A549 (cell line): ENCODE measurements at regions of chr10 and their contacts with region 1.

Region 1: GRCh38 chr10:100743626-100744135 is 1.7 kb upstream of the PAX2 start:
- DNase-seq: peak; percentile 84 to 85
- ATAC-seq: peak; percentile 54 to 75
- H3K4me3 ChIP-seq: peak overlapping the region; percentile 50
- H3K27ac ChIP-seq: peak overlapping the region in 1 of 2 experiments; percentile 8; a peak in 1 of 6 replicates
- H3K4me1 ChIP-seq: peaks cover 29% of the 10 kb centered on the region
- CTCF ChIP-seq: peak; percentile 88
- EP300 ChIP-seq: no peak
- POLR2A ChIP-seq: no peak
- RAD21 ChIP-seq: peak; percentile 90 to 93

Region 2: DNA sequence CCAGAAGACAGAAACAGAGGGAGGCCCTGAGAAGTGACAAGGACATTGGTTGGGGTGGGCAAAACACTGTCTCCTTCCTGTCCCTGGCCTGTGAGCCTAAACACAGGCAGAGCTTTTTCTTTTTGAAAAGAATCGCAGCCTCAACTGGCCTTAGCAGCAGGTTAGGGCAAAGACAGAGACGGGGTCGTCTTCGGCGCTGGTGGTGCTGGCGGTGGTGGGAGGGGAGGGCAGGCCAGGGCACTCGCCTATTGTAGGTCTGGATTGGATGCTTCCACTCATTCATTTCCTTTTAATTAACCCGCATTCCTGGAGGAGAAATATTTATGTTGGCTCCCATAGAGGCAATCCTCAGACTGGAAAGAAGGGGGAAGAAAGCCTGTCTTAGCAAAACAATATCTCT is 258.3 kb before region 1 on chr10:
- CTCF ChIA-PET with region 1: no interaction called
- POLR2A ChIA-PET with region 1: no interaction called
- DNase-seq: no peak
- ATAC-seq: no peak
- H3K4me3 ChIP-seq: no peak overlapping the region
- H3K27ac ChIP-seq: no peak overlapping the region
- H3K4me1 ChIP-seq: 0 out of 3 replicates have a peak, but pooled peaks cover 3% of the 10 kb centered on the region
- CTCF ChIP-seq: no peak
- EP300 ChIP-seq: no peak
- POLR2A ChIP-seq: no peak
- RAD21 ChIP-seq: no peak

Region 3: GRCh38 chr10:100551196-100551595 is 192.5 kb before region 1 on chr10:
- CTCF ChIA-PET with region 1: interaction called, 26 read pairs
- POLR2A ChIA-PET with region 1: no interaction called
- DNase-seq: no peak
- ATAC-seq: no peak
- H3K4me3 ChIP-seq: no peak overlapping the region
- H3K27ac ChIP-seq: no peak overlapping the region
- H3K4me1 ChIP-seq: peaks cover 6% of the 10 kb centered on the region; the same call in 1 of the 3 replicates
- CTCF ChIP-seq: no peak
- EP300 ChIP-seq: no peak
- POLR2A ChIP-seq: no peak
- RAD21 ChIP-seq: no peak

Region 4: GRCh38 chr10:100598166-100598565 is 145.5 kb before region 1 on chr10:
- CTCF ChIA-PET with region 1: interaction called, 11 read pairs
- POLR2A ChIA-PET with region 1: no interaction called
- DNase-seq: no peak
- ATAC-seq: no peak
- H3K4me3 ChIP-seq: no peak overlapping the region
- H3K27ac ChIP-seq: no peak overlapping the region
- H3K4me1 ChIP-seq: no peaks in the 10 kb centered on the region
- CTCF ChIP-seq: no peak
- EP300 ChIP-seq: no peak
- POLR2A ChIP-seq: no peak
- RAD21 ChIP-seq: no peak

Region 5: DNA sequence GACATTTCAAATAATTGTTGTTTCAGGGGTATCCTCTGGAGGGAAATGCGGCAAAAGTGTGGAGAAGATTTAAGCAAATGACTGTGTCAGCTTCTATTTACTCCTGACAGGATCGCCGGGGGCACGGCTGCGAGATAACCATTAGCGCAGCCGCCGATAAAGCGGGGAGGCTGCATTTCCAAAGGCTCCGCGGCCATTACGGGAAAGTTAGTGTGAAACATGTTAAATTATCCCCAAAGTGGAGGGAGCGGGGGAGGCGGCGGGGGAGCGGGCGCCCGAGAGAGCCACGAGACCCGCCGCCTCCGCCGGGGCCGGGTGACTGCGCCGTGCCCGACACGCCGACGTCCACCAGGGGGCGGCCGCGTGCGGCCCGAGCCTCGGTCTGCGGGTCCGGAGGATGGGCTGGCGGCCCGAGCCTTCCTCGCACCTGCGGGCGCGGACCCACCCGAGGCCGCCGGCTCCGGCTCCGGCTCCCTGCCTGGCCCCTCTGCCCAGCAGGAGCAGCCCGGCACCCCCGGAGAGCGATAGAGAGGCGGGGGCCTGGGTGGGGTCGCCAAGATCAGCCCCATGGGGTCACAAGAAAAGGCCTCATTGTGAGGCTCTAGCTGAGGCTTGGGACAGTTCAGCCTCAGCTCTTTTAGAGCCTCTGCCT is 72.7 kb before region 1 on chr10:
- CTCF ChIA-PET with region 1: interaction called, 66 read pairs
- POLR2A ChIA-PET with region 1: no interaction called
- DNase-seq: peak; percentile 26 to 47
- ATAC-seq: peak; percentile 85 to 94
- H3K4me3 ChIP-seq: peak overlapping the region; percentile 37
- H3K27ac ChIP-seq: peak overlapping the region in 1 of 2 experiments; percentile 43; a peak in 2 of 6 replicates
- H3K4me1 ChIP-seq: no peaks in the 10 kb centered on the region
- CTCF ChIP-seq: peak; percentile 97
- EP300 ChIP-seq: no peak
- POLR2A ChIP-seq: no peak
- RAD21 ChIP-seq: peak; percentile 41 to 74

Region 6: GRCh38 chr10:100693821-100694220 is 49.9 kb before region 1 on chr10:
- CTCF ChIA-PET with region 1: interaction called, 14 read pairs
- POLR2A ChIA-PET with region 1: no interaction called
- DNase-seq: no peak
- ATAC-seq: no peak
- H3K4me3 ChIP-seq: no peak overlapping the region
- H3K27ac ChIP-seq: no peak overlapping the region
- H3K4me1 ChIP-seq: peaks cover 20% of the 10 kb centered on the region
- CTCF ChIP-seq: no peak
- EP300 ChIP-seq: no peak
- POLR2A ChIP-seq: no peak
- RAD21 ChIP-seq: no peak

Region 7: DNA sequence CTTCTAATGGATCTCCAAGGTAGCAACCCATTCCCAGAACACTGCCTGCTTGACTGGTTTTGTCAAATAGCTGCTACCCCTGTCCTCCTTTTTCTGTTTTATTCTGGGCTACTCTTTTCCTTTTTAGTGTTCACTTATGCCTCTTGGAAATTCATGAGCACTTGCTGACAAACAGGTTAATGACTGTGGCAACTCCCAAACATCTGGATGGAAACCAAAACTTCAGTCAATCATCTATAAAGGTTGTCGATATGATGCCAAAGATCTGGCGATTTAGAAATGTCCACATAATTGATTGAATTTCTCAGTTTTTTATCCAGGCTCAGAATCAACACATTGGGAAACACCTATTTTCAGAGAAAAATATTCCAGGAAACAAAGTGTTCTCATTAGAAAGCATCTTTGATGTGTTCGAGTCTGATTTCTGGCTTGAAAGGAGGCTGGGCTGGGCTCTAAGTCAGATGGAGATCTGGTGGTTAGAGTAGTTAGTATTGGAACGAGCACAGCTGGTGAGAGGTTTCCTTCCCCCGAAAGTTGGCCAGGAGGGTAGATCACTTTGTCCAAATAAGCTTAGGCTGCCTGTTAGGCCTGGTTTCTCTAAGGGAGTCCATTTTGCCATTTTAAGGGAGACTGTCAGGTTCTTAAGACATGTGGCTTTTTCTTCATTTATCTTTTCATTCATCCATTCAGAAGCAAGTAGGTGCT is 19.5 kb after region 1 on chr10:
- CTCF ChIA-PET with region 1: interaction called, 11 read pairs
- POLR2A ChIA-PET with region 1: no interaction called
- DNase-seq: no peak
- ATAC-seq: no peak
- H3K4me3 ChIP-seq: no peak overlapping the region
- H3K27ac ChIP-seq: no peak overlapping the region
- H3K4me1 ChIP-seq: no peaks in the 10 kb centered on the region
- CTCF ChIP-seq: no peak
- EP300 ChIP-seq: no peak
- POLR2A ChIP-seq: no peak
- RAD21 ChIP-seq: no peak

Region 8: GRCh38 chr10:100872034-100872791 is 128.5 kb after region 1 on chr10:
- CTCF ChIA-PET with region 1: interaction called, 51 read pairs
- POLR2A ChIA-PET with region 1: no interaction called
- DNase-seq: peak; percentile 63 to 92
- ATAC-seq: peak; percentile 76 to 94; a peak in 5 of 6 replicates
- H3K4me3 ChIP-seq: no peak overlapping the region
- H3K27ac ChIP-seq: 0 out of 6 replicates have a peak overlapping the region, but pooled peaks of 1 of the 2 experiments have one; percentile 20
- H3K4me1 ChIP-seq: peaks cover 17% of the 10 kb centered on the region; the same call in 2 of the 3 replicates
- CTCF ChIP-seq: peak; percentile 75
- EP300 ChIP-seq: no peak
- POLR2A ChIP-seq: no peak
- RAD21 ChIP-seq: peak; percentile 72 to 82